ENCODE measurements at regions of chr14 and their contacts with region 1.

Region 1: DNA sequence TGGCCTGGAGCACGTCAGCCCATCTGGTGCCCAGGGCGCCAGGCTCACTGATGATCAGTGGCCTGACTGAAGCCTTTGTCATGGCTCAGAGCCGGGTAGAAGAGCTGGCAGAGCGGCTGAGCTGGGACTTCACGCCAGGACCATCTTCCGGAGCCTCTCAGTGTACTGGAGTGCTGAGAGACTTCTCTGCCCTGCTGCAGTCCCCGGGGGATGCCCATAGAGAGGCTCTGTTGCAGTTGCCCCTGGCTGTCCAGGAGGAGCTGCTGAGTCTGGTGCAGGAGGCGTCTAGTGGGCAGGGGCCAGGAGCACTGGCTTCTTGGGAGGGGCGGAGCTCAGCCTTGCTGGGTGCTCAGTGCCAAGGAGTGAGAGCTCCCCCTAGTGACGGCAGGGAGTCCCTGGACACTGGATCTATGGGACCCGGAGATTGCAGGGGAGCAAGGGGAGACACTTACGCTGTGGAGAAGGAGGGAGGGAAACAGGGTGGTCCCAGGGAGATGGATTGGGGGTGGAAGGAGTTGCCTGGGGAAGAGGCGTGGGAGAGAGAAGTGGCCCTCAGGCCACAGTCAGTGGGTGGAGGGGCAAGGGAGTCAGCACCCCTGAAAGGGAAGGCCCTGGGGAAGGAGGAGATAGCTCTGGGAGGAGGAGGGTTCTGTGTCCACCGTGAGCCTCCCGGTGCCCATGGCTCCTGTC is 2.0 kb downstream of the KHNYN start:
- DNase-seq: peak; percentile 91 to 95 (median 93)
- ATAC-seq: peak; percentile 60 to 76 (median 66)
- H3K4me3 ChIP-seq: peak overlapping the region in 10 of 12 donors; percentile 61 to 89 (median 82)
- H3K27ac ChIP-seq: peak overlapping the region in 11 of 12 donors; percentile 80 to 100 (median 96)
- H3K4me1 ChIP-seq: peaks cover 3 to 60% (median 39%) of the 10 kb centered on the region in 12 donors
- H3K27me3 ChIP-seq: no peaks in the 10 kb centered on the region
- CTCF ChIP-seq: peak; percentile 82 to 96 (median 90)
- POLR2A ChIP-seq: no peak

Region 2: GRCh38 chr14:24241829-24242443 is 189.8 kb before region 1 on chr14:
- intact Hi-C with region 1: loop called in 9 of 10 experiments (anchors 2 to 10 kb)
- DNase-seq: peak; percentile 92 to 96 (median 95)
- ATAC-seq: peak; percentile 89 to 95 (median 94)
- H3K4me3 ChIP-seq: peak overlapping the region; percentile 42 to 94 (median 72)
- H3K27ac ChIP-seq: peak overlapping the region; percentile 92 to 100 (median 98)
- H3K4me1 ChIP-seq: peaks cover 16 to 59% (median 42%) of the 10 kb centered on the region in 12 donors
- H3K27me3 ChIP-seq: no peaks in the 10 kb centered on the region
- CTCF ChIP-seq: peak; percentile 52 to 75 (median 64)
- POLR2A ChIP-seq: no peak

Region 3: GRCh38 chr14:24332268-24332993 is 99.3 kb before region 1 on chr14:
- intact Hi-C with region 1: loop called (anchors 1 to 5 kb)
- DNase-seq: peak in 4 of 5 donors; percentile 64 to 71 (median 68)
- ATAC-seq: peak; percentile 9 to 60 (median 52)
- H3K4me3 ChIP-seq: peak overlapping the region in 10 of 12 donors; percentile 3 to 93 (median 74)
- H3K27ac ChIP-seq: peak overlapping the region in 2 of 12 donors; percentile 87 to 96
- H3K4me1 ChIP-seq: peaks cover 6 to 95% (median 36%) of the 10 kb centered on the region in 12 donors
- H3K27me3 ChIP-seq: peaks cover 0 to 37% (median 14%) of the 10 kb centered on the region in 9 donors
- CTCF ChIP-seq: peak; percentile 48 to 76 (median 65)
- POLR2A ChIP-seq: no peak

Region 4: GRCh38 chr14:24366721-24367513 is 64.8 kb before region 1 on chr14:
- intact Hi-C with region 1: loop called (anchors 1 to 5 kb)
- DNase-seq: peak; percentile 90 to 96 (median 91)
- ATAC-seq: peak; percentile 77 to 90 (median 82)
- H3K4me3 ChIP-seq: peak overlapping the region; percentile 21 to 81 (median 57)
- H3K27ac ChIP-seq: peak overlapping the region; percentile 77 to 99 (median 90)
- H3K4me1 ChIP-seq: peaks cover 0 to 42% (median 20%) of the 10 kb centered on the region in 12 donors
- H3K27me3 ChIP-seq: peaks cover 0 to 37% (median 6%) of the 10 kb centered on the region in 9 donors
- CTCF ChIP-seq: no peak
- POLR2A ChIP-seq: peak in 1 of 2 donors; percentile 67